ENCODE measurements at regions of chr1 and their contacts with region 1.

Region 1: GRCh38 chr1:162357681-162358266 is 18.9 kb downstream of the SPATA46 start:
- DNase-seq: no peak
- ATAC-seq: peak; percentile 79
- H3K4me3 Mint-ChIP-seq: no peak overlapping the region
- H3K27ac Mint-ChIP-seq: no peak overlapping the region
- H3K4me1 Mint-ChIP-seq: peaks cover 12% of the 10 kb centered on the region
- H3K27me3 Mint-ChIP-seq: no peaks in the 10 kb centered on the region
- CTCF ChIP-seq: peak; percentile 49; the same call in 1 of the 2 replicates

Region 2: DNA sequence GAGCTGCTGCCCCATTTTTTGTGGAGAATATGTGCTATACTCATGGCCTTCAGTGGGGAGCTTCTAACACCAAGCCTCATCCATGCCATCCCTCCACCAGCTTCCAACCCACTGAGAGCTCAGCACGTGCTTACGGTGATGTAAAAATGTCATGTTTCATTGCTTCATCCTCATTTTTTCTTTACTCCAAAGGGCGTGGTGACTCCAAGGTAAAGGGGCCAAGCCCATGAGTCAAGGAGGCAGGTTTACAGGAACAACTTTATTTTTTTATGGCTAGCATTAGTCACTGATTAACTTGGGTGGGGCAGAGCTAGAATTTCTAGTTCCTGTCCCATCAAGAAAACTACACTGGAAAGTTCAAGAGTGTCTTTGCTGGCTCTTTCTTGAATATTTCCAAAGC is 23.6 kb after region 1 on chr1 and contains the start of gene C1orf226:
- CTCF ChIA-PET with region 1: interaction called, 10 read pairs
- POLR2A ChIA-PET with region 1: no interaction called
- DNase-seq: no peak
- ATAC-seq: no peak
- H3K4me3 Mint-ChIP-seq: no peak within 1 kb of the TSS
- H3K27ac Mint-ChIP-seq: no peak within 1 kb of the TSS
- H3K4me1 Mint-ChIP-seq: peaks cover 5% of the 10 kb centered on the region; the same call in 1 of the 2 replicates
- H3K27me3 Mint-ChIP-seq: no peaks in the 10 kb centered on the region
- CTCF ChIP-seq: no peak
- total RNA-seq, gene C1orf226: 15.7 to 21.4 TPM (median 18.8 TPM) in 3 replicates

Region 3: GRCh38 chr1:162391790-162392563 is 34.2 kb after region 1 on chr1:
- CTCF ChIA-PET with region 1: interaction called, 21 read pairs
- POLR2A ChIA-PET with region 1: no interaction called
- DNase-seq: no peak
- ATAC-seq: peak; percentile 38
- H3K4me3 Mint-ChIP-seq: no peak overlapping the region
- H3K27ac Mint-ChIP-seq: 0 out of 2 replicates have a peak overlapping the region, but pooled peaks have one; percentile 57
- H3K4me1 Mint-ChIP-seq: peaks cover 23% of the 10 kb centered on the region
- H3K27me3 Mint-ChIP-seq: no peaks in the 10 kb centered on the region
- CTCF ChIP-seq: peak; percentile 75

Region 4: DNA sequence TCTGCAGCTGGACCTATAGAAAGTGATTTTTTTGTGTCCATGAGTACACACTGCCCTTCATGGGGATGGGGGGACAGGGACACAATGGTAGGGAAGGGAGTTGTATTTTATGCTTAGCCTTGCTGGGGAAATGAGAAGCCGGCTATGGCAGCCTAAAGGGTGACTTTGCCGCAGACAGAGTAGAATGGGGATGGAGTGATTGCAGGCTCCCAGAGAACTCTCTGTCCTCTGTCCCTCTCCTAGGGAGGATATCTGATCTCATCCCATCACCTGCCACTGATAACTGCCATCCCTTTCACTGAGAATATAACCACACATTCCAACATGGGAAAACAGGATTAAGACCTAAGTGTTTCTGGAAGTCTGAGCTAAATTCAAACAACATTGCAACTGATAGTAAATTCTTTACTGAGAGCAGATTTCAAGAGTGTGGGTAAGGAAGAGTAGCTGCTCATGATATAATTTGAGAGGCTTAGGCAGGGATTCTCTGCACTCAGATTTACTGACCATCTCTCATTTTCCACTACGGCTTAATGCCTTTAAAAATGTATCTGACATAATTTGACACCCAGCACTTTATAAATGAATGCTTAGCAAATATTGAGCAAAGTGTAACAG is 40.3 kb after region 1 on chr1:
- CTCF ChIA-PET with region 1: interaction called, 14 read pairs
- POLR2A ChIA-PET with region 1: no interaction called
- DNase-seq: no peak
- ATAC-seq: peak; percentile 30
- H3K4me3 Mint-ChIP-seq: no peak overlapping the region
- H3K27ac Mint-ChIP-seq: 0 out of 2 replicates have a peak overlapping the region, but pooled peaks have one; percentile 6
- H3K4me1 Mint-ChIP-seq: peaks cover 25% of the 10 kb centered on the region
- H3K27me3 Mint-ChIP-seq: no peaks in the 10 kb centered on the region
- CTCF ChIP-seq: no peak

Region 5: GRCh38 chr1:162590101-162590500 is 232.3 kb after region 1 on chr1:
- CTCF ChIA-PET with region 1: no interaction called
- POLR2A ChIA-PET with region 1: no interaction called
- DNase-seq: no peak
- ATAC-seq: no peak
- H3K4me3 Mint-ChIP-seq: no peak overlapping the region
- H3K27ac Mint-ChIP-seq: no peak overlapping the region
- H3K4me1 Mint-ChIP-seq: no peaks in the 10 kb centered on the region
- H3K27me3 Mint-ChIP-seq: no peaks in the 10 kb centered on the region
- CTCF ChIP-seq: no peak

Measured in WTC11 (cell line).